CD4-positive, alpha-beta memory T cell (primary cell): ENCODE measurements at regions of chr1 and their contacts with region 1.

Region 1: GRCh38 chr1:32240140-32240951 is 6.7 kb upstream of the FAM167B start:
- DNase-seq: peak; percentile 53 to 75 (median 55)
- H3K4me3 ChIP-seq: peak overlapping the region; percentile 81
- H3K4me3 Mint-ChIP-seq: peak overlapping the region; percentile 87 to 93 (median 90)
- H3K27ac ChIP-seq: peak overlapping the region; percentile 48
- H3K27ac Mint-ChIP-seq: peak overlapping the region; percentile 68 to 88 (median 79)
- H3K4me1 ChIP-seq: peaks cover 14% of the 10 kb centered on the region
- H3K4me1 Mint-ChIP-seq: peaks cover 0 to 35% (median 15%) of the 10 kb centered on the region in 4 donors
- H3K27me3 ChIP-seq: no peaks in the 10 kb centered on the region
- H3K27me3 Mint-ChIP-seq: no peaks in the 10 kb centered on the region

Region 2: DNA sequence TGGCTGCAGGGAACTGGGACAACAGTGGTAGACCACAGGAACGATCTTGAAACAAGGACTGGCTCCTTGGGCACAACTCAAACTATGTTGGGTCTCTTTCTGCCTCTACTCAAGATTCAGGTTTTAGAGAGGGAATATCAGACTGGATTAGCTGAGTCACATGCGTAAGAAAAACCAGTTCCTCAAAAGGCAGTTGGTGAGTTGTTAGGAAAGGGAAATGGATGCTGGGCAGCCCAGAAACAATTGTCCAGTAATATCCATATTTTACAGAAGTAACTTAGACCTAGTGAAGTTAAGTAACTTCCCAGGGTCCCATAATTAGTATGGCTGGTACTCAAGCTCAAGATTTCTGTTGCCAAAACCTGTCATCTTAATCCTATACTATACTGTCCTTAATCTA is 194.6 kb before region 1 on chr1:
- CTCF ChIA-PET with region 1: no interaction called
- POLR2A ChIA-PET with region 1: no interaction called
- intact Hi-C with region 1: no loop called
- DNase-seq: no peak
- H3K4me3 ChIP-seq: no peak overlapping the region
- H3K4me3 Mint-ChIP-seq: no peak overlapping the region
- H3K27ac ChIP-seq: no peak overlapping the region
- H3K27ac Mint-ChIP-seq: peak overlapping the region in 1 of 7 donors; percentile 26
- H3K4me1 ChIP-seq: no peaks in the 10 kb centered on the region
- H3K4me1 Mint-ChIP-seq: peaks cover 0 to 5% (median 3%) of the 10 kb centered on the region in 4 donors
- H3K27me3 ChIP-seq: no peaks in the 10 kb centered on the region
- H3K27me3 Mint-ChIP-seq: no peaks in the 10 kb centered on the region

Region 3: DNA sequence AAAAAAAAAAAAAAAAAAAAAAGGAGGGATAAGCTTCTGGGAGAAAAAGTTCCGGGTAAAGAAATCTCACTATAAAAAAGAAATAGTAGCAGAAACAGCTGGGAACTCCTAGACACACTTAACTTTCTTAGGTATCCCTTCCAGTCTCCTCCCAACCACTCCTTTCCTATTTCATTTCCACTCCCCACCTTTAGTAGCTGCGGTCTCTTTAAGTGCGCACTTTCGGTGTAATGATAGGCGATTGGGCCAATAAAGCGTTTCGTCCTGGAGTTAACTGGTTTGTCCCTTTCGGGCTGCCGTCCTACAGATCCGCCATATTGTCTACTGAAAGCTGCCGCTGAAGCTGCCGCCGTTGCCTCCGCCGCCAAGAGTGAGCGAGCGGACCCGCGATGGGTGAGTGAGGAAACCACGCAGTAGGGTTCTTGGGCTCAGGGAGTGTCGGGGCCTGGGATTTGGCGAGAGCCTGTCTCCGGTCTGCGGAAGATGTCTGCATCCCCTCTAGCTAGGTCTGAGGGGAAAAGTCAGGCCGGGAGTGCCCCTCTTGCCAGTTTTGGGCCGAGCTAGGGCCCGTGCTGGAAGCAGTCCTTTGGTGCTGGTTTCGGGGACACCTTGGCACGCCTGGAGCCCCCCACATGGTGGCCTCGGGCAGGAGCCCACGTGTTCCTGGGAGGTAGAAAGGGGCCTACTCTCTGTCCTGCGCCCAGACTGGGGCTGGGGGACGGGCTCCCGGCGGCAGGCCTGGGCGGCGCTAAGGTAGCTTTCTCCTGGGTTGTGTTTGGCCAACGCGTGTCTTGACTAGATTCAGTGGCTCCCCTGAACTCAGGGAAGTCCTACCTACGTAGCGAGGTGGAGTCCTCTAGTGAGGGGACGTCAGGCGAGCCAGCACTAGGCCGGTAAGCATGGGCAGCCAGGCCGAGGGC is 132.3 kb before region 1 on chr1 and contains the start of gene KPNA6:
- CTCF ChIA-PET with region 1: no interaction called
- POLR2A ChIA-PET with region 1: interaction called, 12 read pairs
- intact Hi-C with region 1: no loop called
- DNase-seq: peak; percentile 93 to 95 (median 94)
- H3K4me3 ChIP-seq: peak within 1 kb of the TSS; percentile 67 to 83
- H3K4me3 Mint-ChIP-seq: peak within 1 kb of the TSS; percentile 96 to 100 (median 100)
- H3K27ac ChIP-seq: peak within 1 kb of the TSS; percentile 94
- H3K27ac Mint-ChIP-seq: peak within 1 kb of the TSS; percentile 93 to 100 (median 97)
- H3K4me1 ChIP-seq: peaks cover 47% of the 10 kb centered on the region
- H3K4me1 Mint-ChIP-seq: peaks cover 31 to 62% (median 45%) of the 10 kb centered on the region in 4 donors
- H3K27me3 ChIP-seq: no peaks in the 10 kb centered on the region
- H3K27me3 Mint-ChIP-seq: no peaks in the 10 kb centered on the region
- total RNA-seq, gene KPNA6: 60.3 to 62.5 TPM

Region 4: GRCh38 chr1:32221980-32222755 is 18.2 kb before region 1 on chr1 and contains the starts of genes EIF3I and TMEM234:
- CTCF ChIA-PET with region 1: interaction called, 35 read pairs
- POLR2A ChIA-PET with region 1: interaction called, 24 read pairs
- intact Hi-C with region 1: no loop called
- DNase-seq: peak; percentile 89 to 96 (median 91)
- H3K4me3 ChIP-seq: peak within 1 kb of the TSS; percentile 96 to 97
- H3K4me3 Mint-ChIP-seq: peak within 1 kb of the TSS; percentile 95 to 99 (median 97)
- H3K27ac ChIP-seq: peak within 1 kb of the TSS; percentile 99
- H3K27ac Mint-ChIP-seq: peak within 1 kb of the TSS; percentile 99 to 100 (median 99)
- H3K4me1 ChIP-seq: peaks cover 30% of the 10 kb centered on the region
- H3K4me1 Mint-ChIP-seq: peaks cover 23 to 59% (median 38%) of the 10 kb centered on the region in 4 donors
- H3K27me3 ChIP-seq: no peaks in the 10 kb centered on the region
- H3K27me3 Mint-ChIP-seq: no peaks in the 10 kb centered on the region
- total RNA-seq, gene EIF3I: 78.3 to 85.3 TPM
- total RNA-seq, gene TMEM234: 27.1 to 30.7 TPM

Region 5: DNA sequence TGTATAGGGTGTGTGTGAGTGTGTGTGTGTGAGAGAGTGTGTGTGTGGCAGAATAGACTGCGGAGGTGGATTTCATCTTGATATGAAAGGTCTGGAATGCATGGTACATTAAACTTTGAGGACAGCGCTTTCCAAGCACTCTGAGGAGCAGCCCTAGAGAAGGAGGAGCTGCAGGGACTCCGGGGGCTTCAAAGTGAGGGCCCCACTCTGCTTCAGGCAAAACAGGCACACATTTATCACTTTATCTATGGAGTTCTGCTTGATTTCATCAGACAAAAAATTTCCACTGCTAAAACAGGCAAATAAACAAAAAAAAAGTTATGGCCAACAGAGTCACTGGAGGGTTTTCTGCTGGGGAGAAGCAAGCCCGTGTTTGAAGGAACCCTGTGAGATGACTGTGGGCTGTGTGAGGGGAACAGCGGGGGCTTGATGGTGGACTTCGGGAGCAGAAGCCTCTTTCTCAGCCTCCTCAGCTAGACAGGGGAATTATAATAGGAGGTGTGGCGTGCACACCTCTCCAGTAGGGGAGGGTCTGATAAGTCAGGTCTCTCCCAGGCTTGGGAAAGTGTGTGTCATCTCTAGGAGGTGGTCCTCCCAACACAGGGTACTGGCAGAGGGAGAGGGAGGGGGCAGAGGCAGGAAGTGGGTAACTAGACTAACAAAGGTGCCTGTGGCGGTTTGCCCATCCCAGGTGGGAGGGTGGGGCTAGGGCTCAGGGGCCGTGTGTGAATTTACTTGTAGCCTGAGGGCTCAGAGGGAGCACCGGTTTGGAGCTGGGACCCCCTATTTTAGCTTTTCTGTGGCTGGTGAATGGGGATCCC is 33.3 kb after region 1 on chr1:
- CTCF ChIA-PET with region 1: interaction called, 12 read pairs
- POLR2A ChIA-PET with region 1: interaction called, 819 read pairs
- intact Hi-C with region 1: loop called (anchors 2 kb)
- DNase-seq: peak; percentile 80 to 98 (median 82)
- H3K4me3 ChIP-seq: peak overlapping the region; percentile 5 to 36
- H3K4me3 Mint-ChIP-seq: peak overlapping the region; percentile 80 to 89 (median 82)
- H3K27ac ChIP-seq: peak overlapping the region; percentile 62
- H3K27ac Mint-ChIP-seq: peak overlapping the region; percentile 95 to 100 (median 97)
- H3K4me1 ChIP-seq: peaks cover 61% of the 10 kb centered on the region
- H3K4me1 Mint-ChIP-seq: peaks cover 44 to 63% (median 51%) of the 10 kb centered on the region in 4 donors
- H3K27me3 ChIP-seq: no peaks in the 10 kb centered on the region
- H3K27me3 Mint-ChIP-seq: no peaks in the 10 kb centered on the region

Region 6: GRCh38 chr1:32335790-32336590 is 95.6 kb after region 1 on chr1 and contains the start of gene MARCKSL1:
- CTCF ChIA-PET with region 1: interaction called, 13 read pairs
- POLR2A ChIA-PET with region 1: interaction called, 55 read pairs
- intact Hi-C with region 1: no loop called
- DNase-seq: peak; percentile 82 to 85 (median 85)
- H3K4me3 ChIP-seq: peak within 1 kb of the TSS; percentile 29 to 48
- H3K4me3 Mint-ChIP-seq: peak within 1 kb of the TSS; percentile 83 to 92 (median 87)
- H3K27ac ChIP-seq: peak within 1 kb of the TSS; percentile 45
- H3K27ac Mint-ChIP-seq: peak within 1 kb of the TSS; percentile 31 to 95 (median 85)
- H3K4me1 ChIP-seq: peaks cover 40% of the 10 kb centered on the region
- H3K4me1 Mint-ChIP-seq: peaks cover 26 to 44% (median 34%) of the 10 kb centered on the region in 4 donors
- H3K27me3 ChIP-seq: no peaks in the 10 kb centered on the region
- H3K27me3 Mint-ChIP-seq: no peaks in the 10 kb centered on the region
- total RNA-seq, gene MARCKSL1: 46.5 to 47.3 TPM

Region 7: DNA sequence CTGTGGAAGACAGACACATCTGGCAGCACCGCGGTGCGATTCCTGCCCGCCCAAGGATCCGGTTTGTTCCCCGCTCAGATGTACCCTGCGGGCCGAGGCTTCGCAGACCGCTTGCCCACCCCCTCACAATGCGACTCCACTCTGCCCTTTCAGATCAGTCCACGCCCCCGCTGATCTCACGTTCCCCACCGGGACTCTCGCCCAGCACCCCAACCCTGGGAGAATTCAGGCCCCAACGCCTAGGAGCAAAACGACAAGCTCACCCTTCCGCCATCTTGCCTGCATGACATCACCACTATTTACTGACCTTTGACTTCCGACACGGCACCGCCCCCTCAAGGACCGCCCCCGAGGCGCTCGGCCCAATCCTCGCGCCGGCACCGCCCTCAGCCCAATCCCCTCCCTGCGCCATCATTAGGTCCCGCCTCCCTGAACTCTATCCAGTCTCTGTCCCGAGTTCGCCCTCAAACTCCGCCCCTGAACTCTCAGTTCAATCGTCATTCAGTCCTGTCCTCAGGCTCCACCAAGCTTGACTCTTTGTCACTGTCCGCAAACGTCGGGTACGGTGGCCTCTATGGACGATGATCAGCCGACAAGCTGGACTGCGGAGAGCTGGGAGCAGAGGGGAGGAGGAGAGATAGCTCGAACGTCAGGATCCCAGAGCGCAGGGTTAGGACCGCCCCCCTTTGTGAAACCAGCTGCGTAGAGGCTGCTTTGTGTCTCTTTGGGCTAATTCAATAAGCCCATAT is 154.0 kb after region 1 on chr1 and contains the start of gene BSDC1:
- CTCF ChIA-PET with region 1: interaction called, 3 read pairs
- POLR2A ChIA-PET with region 1: interaction called, 11 read pairs
- intact Hi-C with region 1: no loop called
- DNase-seq: peak; percentile 98 to 99 (median 99)
- H3K4me3 ChIP-seq: peak within 1 kb of the TSS; percentile 87
- H3K4me3 Mint-ChIP-seq: peak within 1 kb of the TSS; percentile 99 to 100 (median 100)
- H3K27ac ChIP-seq: peak within 1 kb of the TSS; percentile 95
- H3K27ac Mint-ChIP-seq: peak within 1 kb of the TSS; percentile 92 to 100 (median 100)
- H3K4me1 ChIP-seq: peaks cover 43% of the 10 kb centered on the region
- H3K4me1 Mint-ChIP-seq: peaks cover 5 to 25% (median 19%) of the 10 kb centered on the region in 4 donors
- H3K27me3 ChIP-seq: no peaks in the 10 kb centered on the region
- H3K27me3 Mint-ChIP-seq: peaks cover 0 to 1% of the 10 kb centered on the region in 2 donors
- total RNA-seq, gene BSDC1: 106 to 112 TPM